WTC11 (cell line): ENCODE measurements at regions of chr11 and their contacts with region 1.

Region 1: GRCh38 chr11:122853971-122854446 is 15.7 kb downstream of the CRTAM start:
- DNase-seq: peak; percentile 39
- ATAC-seq: peak; percentile 86
- H3K4me3 Mint-ChIP-seq: no peak overlapping the region
- H3K27ac Mint-ChIP-seq: no peak overlapping the region
- H3K4me1 Mint-ChIP-seq: peaks cover 34% of the 10 kb centered on the region
- H3K27me3 Mint-ChIP-seq: no peaks in the 10 kb centered on the region
- CTCF ChIP-seq: peak; percentile 59; the same call in 1 of the 2 replicates

Region 2: GRCh38 chr11:122491509-122491908 is 362.5 kb before region 1 on chr11:
- CTCF ChIA-PET with region 1: no interaction called
- POLR2A ChIA-PET with region 1: no interaction called
- DNase-seq: no peak
- ATAC-seq: no peak
- H3K4me3 Mint-ChIP-seq: no peak overlapping the region
- H3K27ac Mint-ChIP-seq: no peak overlapping the region
- H3K4me1 Mint-ChIP-seq: peaks cover 4% of the 10 kb centered on the region; the same call in 1 of the 2 replicates
- H3K27me3 Mint-ChIP-seq: no peaks in the 10 kb centered on the region
- CTCF ChIP-seq: no peak

Region 3: DNA sequence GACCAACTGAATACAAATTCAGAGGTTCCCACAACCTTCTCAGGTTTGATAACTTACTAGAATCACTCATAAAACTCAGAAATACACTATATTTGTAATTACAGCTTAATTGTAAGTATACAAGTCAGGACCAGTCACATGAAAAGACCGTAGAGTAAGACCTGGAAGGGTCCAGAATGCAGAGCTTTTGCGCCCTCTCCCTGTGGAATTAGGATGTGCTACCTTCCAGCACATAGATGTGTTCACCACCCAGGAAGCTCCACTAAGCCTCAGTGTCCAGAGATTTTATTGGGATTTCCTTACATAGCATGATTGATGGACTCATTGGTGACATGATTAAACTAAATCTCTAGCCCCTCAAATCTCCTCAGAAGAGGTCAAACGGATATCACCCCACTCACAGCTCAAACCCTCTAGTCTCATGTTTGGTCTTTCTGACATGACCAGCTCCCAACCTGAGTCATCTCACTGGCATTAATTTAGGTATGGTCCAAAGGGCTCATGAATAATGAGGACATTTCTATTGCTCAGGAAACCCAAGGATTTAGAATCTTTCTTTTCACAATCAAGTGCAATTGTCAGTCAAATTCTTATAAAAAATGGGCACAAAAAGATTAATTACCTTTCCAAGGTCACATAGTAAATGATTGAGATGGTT is 275.7 kb before region 1 on chr11:
- CTCF ChIA-PET with region 1: interaction called, 12 read pairs
- POLR2A ChIA-PET with region 1: no interaction called
- DNase-seq: no peak
- ATAC-seq: 0 out of 2 replicates have a peak, but pooled peaks have one; percentile 20
- H3K4me3 Mint-ChIP-seq: no peak overlapping the region
- H3K27ac Mint-ChIP-seq: no peak overlapping the region
- H3K4me1 Mint-ChIP-seq: peaks cover 10% of the 10 kb centered on the region
- H3K27me3 Mint-ChIP-seq: peaks cover 2% of the 10 kb centered on the region; the same call in 1 of the 2 replicates
- CTCF ChIP-seq: no peak

Region 4: GRCh38 chr11:122655527-122656072 is 198.4 kb before region 1 on chr11 and contains the start of gene UBASH3B:
- CTCF ChIA-PET with region 1: interaction called, 11 read pairs
- POLR2A ChIA-PET with region 1: no interaction called
- DNase-seq: peak; percentile 82
- ATAC-seq: peak; percentile 88
- H3K4me3 Mint-ChIP-seq: peak within 1 kb of the TSS; percentile 93
- H3K27ac Mint-ChIP-seq: 0 out of 2 replicates have a peak within 1 kb of the TSS, but pooled peaks have one; percentile 41
- H3K4me1 Mint-ChIP-seq: peaks cover 21% of the 10 kb centered on the region
- H3K27me3 Mint-ChIP-seq: peaks cover 22% of the 10 kb centered on the region
- CTCF ChIP-seq: no peak
- total RNA-seq, gene UBASH3B: 18.9 to 22.6 TPM (median 21.1 TPM) in 3 replicates

Region 5: GRCh38 chr11:122796128-122796717 is 57.8 kb before region 1 on chr11:
- CTCF ChIA-PET with region 1: interaction called, 77 read pairs
- POLR2A ChIA-PET with region 1: no interaction called
- DNase-seq: peak; percentile 84
- ATAC-seq: peak; percentile 98
- H3K4me3 Mint-ChIP-seq: no peak overlapping the region
- H3K27ac Mint-ChIP-seq: no peak overlapping the region
- H3K4me1 Mint-ChIP-seq: peaks cover 4% of the 10 kb centered on the region; the same call in 1 of the 2 replicates
- H3K27me3 Mint-ChIP-seq: no peaks in the 10 kb centered on the region
- CTCF ChIP-seq: peak; percentile 86

Region 6: GRCh38 chr11:122832721-122833470 is 21.1 kb before region 1 on chr11:
- CTCF ChIA-PET with region 1: interaction called, 11 read pairs
- POLR2A ChIA-PET with region 1: no interaction called
- DNase-seq: no peak
- ATAC-seq: peak; percentile 69
- H3K4me3 Mint-ChIP-seq: no peak overlapping the region
- H3K27ac Mint-ChIP-seq: peak overlapping the region; percentile 86
- H3K4me1 Mint-ChIP-seq: peaks cover 52% of the 10 kb centered on the region
- H3K27me3 Mint-ChIP-seq: peaks cover 3% of the 10 kb centered on the region; the same call in 1 of the 2 replicates
- CTCF ChIP-seq: no peak